ENCODE measurements at regions of chr3 and their contacts with region 1.

Region 1: DNA sequence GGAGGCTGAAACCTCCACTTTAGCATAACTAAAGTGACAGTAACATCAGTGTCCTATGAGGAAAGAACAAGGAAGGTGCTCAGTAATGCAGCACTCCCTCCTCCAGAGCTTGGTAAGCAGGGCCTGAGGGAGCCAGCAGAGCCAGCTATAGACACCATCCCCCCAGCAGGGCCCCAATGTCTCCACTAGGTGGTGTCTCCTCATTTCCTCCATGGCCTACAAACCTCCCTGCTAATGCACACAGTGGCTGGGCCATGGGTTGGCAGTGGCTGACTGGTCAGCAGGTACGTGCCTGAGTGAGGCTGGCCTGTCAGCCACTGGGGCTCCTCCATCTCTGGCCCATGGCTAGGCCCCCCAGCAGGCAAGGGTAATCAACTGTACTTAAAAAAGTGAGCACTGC is 13.6 kb downstream of the MRPS25 start:
- DNase-seq: peak; percentile 78
- H3K4me3 ChIP-seq: peak overlapping the region; percentile 22
- H3K27ac ChIP-seq: peak overlapping the region; percentile 93
- H3K4me1 ChIP-seq: peaks cover 77% of the 10 kb centered on the region
- CTCF ChIP-seq: peak; percentile 86

Region 2: GRCh38 chr3:14863333-14864100 is 188.0 kb before region 1 on chr3:
- CTCF ChIA-PET with region 1: no interaction called
- POLR2A ChIA-PET with region 1: no interaction called
- intact Hi-C with region 1: no loop called
- DNase-seq: no peak
- H3K4me3 ChIP-seq: no peak overlapping the region
- H3K27ac ChIP-seq: no peak overlapping the region
- H3K4me1 ChIP-seq: no peaks in the 10 kb centered on the region
- CTCF ChIP-seq: peak; percentile 56

Region 3: DNA sequence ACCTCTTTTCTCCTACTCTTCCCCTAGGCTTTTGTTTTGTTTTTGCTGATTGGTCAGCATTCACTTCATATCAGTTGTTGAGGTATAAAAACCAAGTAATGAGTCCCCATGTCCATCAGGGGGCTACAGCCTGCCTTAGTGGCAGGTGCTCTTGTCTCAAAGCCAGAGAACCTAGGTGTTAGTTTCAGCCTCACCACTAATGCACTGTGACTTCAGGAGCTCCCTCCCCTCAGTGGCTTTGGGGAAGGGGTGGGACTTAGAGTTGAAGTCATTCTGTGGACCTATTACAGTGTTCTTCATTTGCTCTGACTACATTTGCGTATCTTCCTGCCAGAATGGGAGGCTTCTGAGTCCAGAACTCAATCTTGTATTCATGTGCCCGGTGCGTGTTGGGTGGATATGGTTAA is 62.5 kb before region 1 on chr3:
- CTCF ChIA-PET with region 1: no interaction called
- POLR2A ChIA-PET with region 1: no interaction called
- intact Hi-C with region 1: no loop called
- DNase-seq: peak; percentile 71
- H3K4me3 ChIP-seq: no peak overlapping the region
- H3K27ac ChIP-seq: no peak overlapping the region
- H3K4me1 ChIP-seq: peaks cover 15% of the 10 kb centered on the region
- CTCF ChIP-seq: peak; percentile 48

Region 4: DNA sequence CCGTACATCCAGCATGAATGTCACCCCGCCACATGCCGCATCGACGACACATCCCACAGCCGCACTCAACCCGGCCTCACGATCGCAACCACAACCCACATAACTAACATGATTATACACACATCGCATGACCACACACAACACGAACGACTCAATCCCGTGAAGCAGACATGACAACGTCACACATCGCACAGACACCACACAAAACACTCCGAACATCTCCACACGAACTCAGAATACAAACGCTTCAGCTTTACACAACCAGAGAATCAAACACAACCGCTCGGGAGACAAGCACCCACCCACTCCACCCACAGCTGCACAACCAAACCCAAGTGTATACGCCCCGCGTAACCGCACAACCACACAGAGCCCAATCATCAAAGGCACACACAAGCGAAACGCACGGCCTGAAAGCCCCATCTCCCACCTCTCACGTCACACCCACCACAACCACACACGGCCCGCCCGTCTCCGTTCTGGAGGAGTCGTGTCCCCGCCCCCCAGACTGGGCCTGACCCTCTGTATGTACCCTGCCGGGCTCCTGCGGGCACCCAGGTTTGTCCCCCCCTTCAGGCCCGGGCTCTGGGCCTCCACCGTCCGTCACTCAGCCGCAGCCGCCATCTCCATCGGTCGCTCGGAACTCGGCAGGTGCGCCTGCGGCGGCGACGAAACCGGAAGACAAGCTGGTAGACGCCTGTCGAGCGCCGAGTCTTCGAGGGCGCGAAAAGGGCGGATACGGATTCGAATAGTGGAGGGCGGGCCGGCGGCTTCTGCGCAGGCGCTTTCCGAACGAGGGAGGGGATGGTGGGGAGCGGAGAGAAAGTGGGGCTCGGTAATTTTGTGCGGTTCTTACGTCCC is 47.2 kb after region 1 on chr3 and contains the start of gene RBSN:
- CTCF ChIA-PET with region 1: interaction called, 3 read pairs
- POLR2A ChIA-PET with region 1: interaction called, 6 read pairs
- intact Hi-C with region 1: loop called (anchors 2 kb)
- DNase-seq: peak; percentile 97
- H3K4me3 ChIP-seq: peak within 1 kb of the TSS; percentile 88
- H3K27ac ChIP-seq: peak within 1 kb of the TSS; percentile 39
- H3K4me1 ChIP-seq: peaks cover 16% of the 10 kb centered on the region
- CTCF ChIP-seq: no peak
- total RNA-seq, gene RBSN: 13.3 and 20.6 TPM in 2 replicates

Measured in OCI-LY7 (cell line).